Caco-2 (cell line): ENCODE measurements at regions of chr1 and their contacts with region 1.

Region 1: DNA sequence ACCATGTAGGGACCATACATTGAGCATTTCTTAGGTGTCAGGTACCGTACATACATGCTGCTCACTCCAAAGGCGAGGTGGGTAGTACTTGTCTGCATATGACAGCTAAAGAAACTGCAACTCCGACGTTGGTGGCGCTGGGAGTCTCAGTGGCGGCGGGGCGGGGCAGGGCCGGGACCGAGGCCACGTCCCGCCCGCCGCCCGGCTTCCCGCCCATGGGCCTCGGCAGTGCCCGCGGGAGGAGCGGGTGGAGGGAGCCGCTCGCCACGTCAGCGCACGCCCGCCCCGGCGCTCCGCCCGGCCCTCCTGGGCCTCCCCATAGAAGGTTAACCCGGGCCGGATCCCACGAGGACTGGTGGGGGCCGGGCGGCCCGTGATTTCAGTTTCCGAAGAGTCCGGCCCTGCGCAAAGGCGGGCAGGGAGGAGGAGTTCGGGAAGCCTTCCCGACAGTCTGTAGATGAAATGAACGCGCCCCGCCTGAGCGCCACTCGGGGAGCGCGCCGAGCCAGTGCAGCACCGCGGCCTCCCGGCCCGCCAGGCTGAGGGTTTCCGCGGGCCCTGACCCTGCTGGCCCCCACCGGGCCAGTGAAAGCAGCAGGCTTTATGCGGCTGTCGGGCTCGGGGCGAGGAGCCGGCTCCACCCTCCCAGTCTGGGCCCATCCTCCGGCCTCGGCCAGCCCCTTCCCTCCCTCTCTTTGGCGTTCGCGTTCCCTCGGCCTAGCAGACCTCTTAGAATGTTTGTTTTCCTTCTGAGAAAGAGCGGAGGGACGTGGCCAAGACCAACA is 119.9 kb upstream of the JUN start:
- DNase-seq: peak; percentile 82 to 86
- H3K4me3 ChIP-seq: peak overlapping the region; percentile 48
- H3K4me3 Mint-ChIP-seq: peak overlapping the region; percentile 49
- H3K27ac Mint-ChIP-seq: peak overlapping the region; percentile 77
- H3K4me1 ChIP-seq: peaks cover 31% of the 10 kb centered on the region
- H3K4me1 Mint-ChIP-seq: peaks cover 22% of the 10 kb centered on the region
- H3K27me3 ChIP-seq: no peaks in the 10 kb centered on the region
- H3K27me3 Mint-ChIP-seq: no peaks in the 10 kb centered on the region
- CTCF ChIP-seq: no peak

Region 2: GRCh38 chr1:58816072-58816746 is 87.5 kb before region 1 on chr1:
- CTCF ChIA-PET with region 1: no interaction called
- POLR2A ChIA-PET with region 1: no interaction called
- intact Hi-C with region 1: loop called (anchors 1 kb)
- DNase-seq: peak; percentile 74 to 80
- H3K4me3 ChIP-seq: peak overlapping the region; percentile 55
- H3K4me3 Mint-ChIP-seq: peak overlapping the region; percentile 77
- H3K27ac Mint-ChIP-seq: peak overlapping the region; percentile 73
- H3K4me1 ChIP-seq: peaks cover 22% of the 10 kb centered on the region
- H3K4me1 Mint-ChIP-seq: peaks cover 7% of the 10 kb centered on the region
- H3K27me3 ChIP-seq: no peaks in the 10 kb centered on the region
- H3K27me3 Mint-ChIP-seq: no peaks in the 10 kb centered on the region
- CTCF ChIP-seq: no peak

Region 3: DNA sequence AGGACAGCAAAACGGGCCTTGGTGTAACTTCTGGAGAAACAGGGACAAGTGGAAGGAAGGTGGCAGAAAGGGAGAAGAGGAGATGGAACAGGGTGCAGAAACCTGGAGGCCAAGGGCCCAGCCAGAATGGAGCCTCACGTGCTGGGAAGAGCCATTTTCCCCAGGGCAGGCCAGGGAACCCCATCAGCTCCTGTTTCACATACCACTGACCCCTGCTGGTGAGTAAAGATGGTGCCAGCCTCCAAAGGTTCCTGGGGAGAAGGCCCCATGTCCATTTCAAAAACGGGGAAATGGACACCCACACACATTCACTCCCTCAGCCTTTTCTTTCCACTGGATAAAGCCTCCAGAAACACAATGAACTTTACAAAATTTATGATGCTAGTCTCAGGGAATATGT is 62.3 kb before region 1 on chr1:
- CTCF ChIA-PET with region 1: no interaction called
- POLR2A ChIA-PET with region 1: no interaction called
- intact Hi-C with region 1: loop called (anchors 2 kb)
- DNase-seq: peak in 1 of 2 experiments; percentile 12
- H3K4me3 ChIP-seq: no peak overlapping the region
- H3K4me3 Mint-ChIP-seq: no peak overlapping the region
- H3K27ac Mint-ChIP-seq: no peak overlapping the region
- H3K4me1 ChIP-seq: peaks cover 16% of the 10 kb centered on the region
- H3K4me1 Mint-ChIP-seq: peaks cover 8% of the 10 kb centered on the region
- H3K27me3 ChIP-seq: no peaks in the 10 kb centered on the region
- H3K27me3 Mint-ChIP-seq: no peaks in the 10 kb centered on the region
- CTCF ChIP-seq: no peak

Region 4: GRCh38 chr1:59296358-59297256 is 392.9 kb after region 1 on chr1 and contains the start of gene FGGY:
- CTCF ChIA-PET with region 1: no interaction called
- POLR2A ChIA-PET with region 1: no interaction called
- intact Hi-C with region 1: loop called (anchors 10 kb)
- DNase-seq: peak; percentile 89 to 94
- H3K4me3 ChIP-seq: peak within 1 kb of the TSS; percentile 39
- H3K4me3 Mint-ChIP-seq: peak within 1 kb of the TSS; percentile 83
- H3K27ac Mint-ChIP-seq: peak within 1 kb of the TSS; percentile 79
- H3K4me1 ChIP-seq: no peaks in the 10 kb centered on the region
- H3K4me1 Mint-ChIP-seq: peaks cover 15% of the 10 kb centered on the region
- H3K27me3 ChIP-seq: no peaks in the 10 kb centered on the region
- H3K27me3 Mint-ChIP-seq: no peaks in the 10 kb centered on the region
- CTCF ChIP-seq: no peak
- total RNA-seq, gene FGGY: 3.4 and 6.4 TPM in 2 replicates